MCF 10A (cell line): ENCODE measurements at regions of chr9 and their contacts with region 1.

Region 1: DNA sequence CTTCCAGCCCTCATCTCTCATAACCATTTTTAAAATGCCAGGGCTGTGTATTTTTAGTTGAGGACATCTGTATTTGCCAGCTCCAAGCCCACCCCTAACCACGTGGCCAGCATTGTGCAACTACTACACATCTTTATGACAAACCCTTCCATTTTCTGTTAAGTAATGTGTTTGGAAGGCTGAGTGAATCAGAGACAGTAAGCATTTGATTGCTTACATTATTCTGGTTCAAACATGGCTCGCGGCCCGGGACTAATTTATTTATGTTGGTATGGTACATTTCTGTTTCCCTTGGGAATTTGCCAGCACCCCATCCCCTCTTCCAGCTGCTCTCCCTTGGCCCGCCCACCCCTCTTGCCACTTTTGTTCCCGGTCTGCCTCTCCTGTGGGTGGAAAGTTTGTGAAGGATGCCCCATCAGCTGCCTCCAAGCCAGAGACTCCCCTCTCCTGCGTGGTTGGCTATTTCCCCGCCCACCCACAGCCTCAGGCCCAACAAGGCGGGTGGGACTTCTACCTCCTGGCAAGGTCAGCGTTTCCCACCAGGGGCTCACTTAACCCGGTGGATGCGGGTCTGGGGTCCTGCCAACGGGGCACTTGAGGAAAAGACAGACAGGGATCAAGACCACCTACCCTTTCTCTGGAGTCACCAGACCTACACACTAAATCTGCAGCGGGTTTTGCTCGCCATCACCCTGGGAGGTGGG is 162.2 kb downstream of the HSD17B3 start:
- DNase-seq: peak; percentile 94
- H3K4me3 Mint-ChIP-seq: peak overlapping the region; percentile 38
- H3K27ac Mint-ChIP-seq: no peak overlapping the region
- H3K4me1 Mint-ChIP-seq: peaks cover 22% of the 10 kb centered on the region
- H3K27me3 Mint-ChIP-seq: no peaks in the 10 kb centered on the region
- CTCF ChIP-seq: no peak

Region 2: GRCh38 chr9:96080364-96080763 is 59.4 kb before region 1 on chr9:
- CTCF ChIA-PET with region 1: no interaction called
- POLR2A ChIA-PET with region 1: no interaction called
- intact Hi-C with region 1: loop called (anchors 1 kb)
- DNase-seq: peak; percentile 99
- H3K4me3 Mint-ChIP-seq: peak overlapping the region; percentile 2
- H3K27ac Mint-ChIP-seq: no peak overlapping the region
- H3K4me1 Mint-ChIP-seq: no peaks in the 10 kb centered on the region
- H3K27me3 Mint-ChIP-seq: peaks cover 13% of the 10 kb centered on the region
- CTCF ChIP-seq: no peak

Region 3: DNA sequence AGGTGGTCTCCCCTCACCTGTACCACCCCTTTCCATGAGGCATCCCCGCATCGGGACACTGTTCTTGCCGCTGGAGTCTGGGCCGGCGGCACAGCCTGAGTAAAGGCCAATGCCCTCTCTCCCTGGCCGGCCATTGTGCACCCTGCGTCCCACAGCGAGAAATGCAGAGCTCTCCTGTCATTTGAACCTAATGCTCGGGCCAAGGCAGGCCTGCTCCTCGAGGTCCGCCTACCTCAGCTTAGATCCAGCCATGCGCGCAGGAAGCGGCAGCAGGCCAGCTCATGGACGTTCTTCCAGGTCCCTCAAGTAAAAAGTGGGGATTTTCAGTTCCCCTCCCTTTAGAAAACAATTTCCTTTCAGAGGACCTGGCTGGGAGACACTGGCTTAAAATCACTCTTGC is 27.3 kb after region 1 on chr9:
- CTCF ChIA-PET with region 1: no interaction called
- POLR2A ChIA-PET with region 1: no interaction called
- intact Hi-C with region 1: no loop called
- DNase-seq: no peak
- H3K4me3 Mint-ChIP-seq: no peak overlapping the region
- H3K27ac Mint-ChIP-seq: no peak overlapping the region
- H3K4me1 Mint-ChIP-seq: no peaks in the 10 kb centered on the region
- H3K27me3 Mint-ChIP-seq: peaks cover 19% of the 10 kb centered on the region
- CTCF ChIP-seq: no peak